Heart right ventricle (tissue), 16 donors: ENCODE measurements at regions of chr3 and their contacts with region 1.

Region 1: GRCh38 chr3:113495035-113495434 is 19.9 kb downstream of the SPICE1 start:
- DNase-seq: peak in 1 of 2 donors; percentile 17
- ATAC-seq: no peak
- H3K4me3 ChIP-seq: no peak overlapping the region
- H3K27ac ChIP-seq: no peak overlapping the region
- H3K4me1 ChIP-seq: no peaks in the 10 kb centered on the region
- H3K27me3 ChIP-seq: no peaks in the 10 kb centered on the region
- CTCF ChIP-seq: peak; percentile 14 to 67 (median 52)

Region 2: GRCh38 chr3:113575206-113575605 is 80.2 kb after region 1 on chr3:
- intact Hi-C with region 1: loop called in 7 of 10 experiments (anchors 5 to 10 kb)
- DNase-seq: no peak
- ATAC-seq: no peak
- H3K4me3 ChIP-seq: no peak overlapping the region
- H3K27ac ChIP-seq: no peak overlapping the region
- H3K4me1 ChIP-seq: no peaks in the 10 kb centered on the region
- H3K27me3 ChIP-seq: peaks cover 0 to 19% (median 5%) of the 10 kb centered on the region in 7 donors
- CTCF ChIP-seq: no peak

Region 3: GRCh38 chr3:113626503-113627371 is 131.7 kb after region 1 on chr3:
- intact Hi-C with region 1: loop called (anchors 2 to 5 kb)
- DNase-seq: peak; percentile 42 to 59
- ATAC-seq: peak; percentile 87 to 95 (median 92)
- H3K4me3 ChIP-seq: peak overlapping the region in 7 of 10 donors; percentile 2 to 35 (median 27)
- H3K27ac ChIP-seq: peak overlapping the region in 3 of 10 donors; percentile 27 to 81 (median 35)
- H3K4me1 ChIP-seq: peaks cover 0 to 20% (median 3%) of the 10 kb centered on the region in 9 donors
- H3K27me3 ChIP-seq: peaks cover 0 to 4% (median 0%) of the 10 kb centered on the region in 7 donors
- CTCF ChIP-seq: peak; percentile 73 to 95 (median 88)